ENCODE measurements at regions of chr4 and their contacts with region 1.

Region 1: DNA sequence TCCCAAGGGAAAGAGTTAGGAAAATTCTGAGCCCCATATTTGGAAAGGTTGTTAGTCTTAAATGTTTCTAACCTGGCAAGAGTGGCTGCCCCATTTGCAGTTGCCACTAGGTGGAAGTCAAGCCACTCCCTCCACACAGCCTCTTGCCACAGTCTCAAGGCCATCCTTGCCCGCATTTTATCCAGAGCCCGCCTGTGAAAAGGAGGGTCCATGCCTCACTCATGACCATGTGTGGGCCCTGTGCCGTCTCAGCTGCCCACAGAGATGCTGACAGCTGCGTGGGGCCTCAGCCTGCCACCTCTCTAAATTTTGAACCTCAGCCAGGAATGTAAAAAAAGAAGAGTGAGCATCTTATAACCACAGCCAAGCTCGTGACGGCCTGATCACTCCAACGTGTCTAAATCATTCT is 201.5 kb upstream of the FAM241A start:
- DNase-seq: peak; percentile 31 to 56
- H3K4me3 ChIP-seq: no peak overlapping the region
- H3K27ac ChIP-seq: no peak overlapping the region
- H3K4me1 ChIP-seq: no peaks in the 10 kb centered on the region
- H3K27me3 ChIP-seq: no peaks in the 10 kb centered on the region
- CTCF ChIP-seq: peak; percentile 68 to 80 (median 78)
- EP300 ChIP-seq: no peak
- POLR2A ChIP-seq: no peak
- RAD21 ChIP-seq: peak; percentile 84 to 89

Region 2: DNA sequence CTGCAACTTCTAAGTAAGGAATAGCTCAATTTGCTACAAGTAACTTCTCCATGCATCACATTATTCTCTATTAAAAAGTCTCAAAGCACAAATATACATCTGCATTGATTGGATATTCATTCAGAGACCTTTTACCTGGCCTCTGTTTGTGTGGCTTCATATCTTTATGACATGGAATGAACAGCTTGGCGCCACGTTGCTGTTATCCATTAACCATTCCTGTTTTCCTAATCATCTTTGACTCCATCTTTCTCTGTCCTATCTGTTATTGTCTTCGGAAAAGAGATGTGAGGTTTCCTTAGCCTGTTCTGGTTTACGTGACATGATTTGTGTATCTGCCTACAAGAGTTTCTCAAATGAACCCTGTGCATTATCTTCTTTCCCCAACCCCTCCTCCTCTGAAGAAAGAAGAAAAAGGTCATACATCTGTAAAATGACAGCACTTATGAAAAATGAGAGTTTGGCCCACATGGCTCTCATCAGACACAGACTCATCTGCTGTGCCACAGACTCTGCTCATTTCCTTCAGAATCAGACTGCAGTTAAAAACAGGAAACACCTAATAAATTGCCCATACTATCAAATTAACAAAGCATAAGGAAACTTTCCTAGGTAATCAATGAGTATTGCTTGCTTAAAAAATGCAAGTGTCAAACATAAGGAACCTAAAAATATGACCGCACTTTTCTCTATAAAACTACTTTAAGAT is 146.2 kb before region 1 on chr4:
- CTCF ChIA-PET with region 1: no interaction called
- POLR2A ChIA-PET with region 1: no interaction called
- DNase-seq: no peak
- H3K4me3 ChIP-seq: no peak overlapping the region
- H3K27ac ChIP-seq: no peak overlapping the region
- H3K4me1 ChIP-seq: no peaks in the 10 kb centered on the region
- H3K27me3 ChIP-seq: no peaks in the 10 kb centered on the region
- CTCF ChIP-seq: no peak
- EP300 ChIP-seq: no peak
- POLR2A ChIP-seq: no peak
- RAD21 ChIP-seq: no peak

Region 3: DNA sequence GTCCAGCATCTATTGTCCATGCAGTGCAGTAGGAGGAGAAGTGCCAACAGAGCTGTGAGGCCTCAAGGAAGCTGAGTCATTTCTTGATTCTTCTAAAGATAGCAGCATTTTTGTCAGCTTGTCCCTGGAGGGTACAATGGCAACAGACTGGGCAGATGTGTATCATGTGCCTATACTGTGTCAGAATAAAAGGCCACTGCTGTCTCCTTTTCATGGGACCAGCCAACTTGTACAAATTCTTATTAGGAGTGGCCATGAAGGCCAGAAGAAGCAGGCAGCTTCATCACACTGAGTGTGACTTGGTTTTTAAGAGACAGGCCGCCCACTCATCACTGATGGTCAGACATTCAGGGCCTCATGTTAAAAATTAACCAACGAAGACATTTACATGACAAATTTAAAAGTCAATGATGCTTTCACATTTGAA is 16.5 kb after region 1 on chr4:
- CTCF ChIA-PET with region 1: interaction called, 36 read pairs
- POLR2A ChIA-PET with region 1: no interaction called
- DNase-seq: no peak
- H3K4me3 ChIP-seq: no peak overlapping the region
- H3K27ac ChIP-seq: no peak overlapping the region
- H3K4me1 ChIP-seq: no peaks in the 10 kb centered on the region
- H3K27me3 ChIP-seq: no peaks in the 10 kb centered on the region
- CTCF ChIP-seq: no peak
- EP300 ChIP-seq: no peak
- POLR2A ChIP-seq: no peak
- RAD21 ChIP-seq: no peak

Region 4: DNA sequence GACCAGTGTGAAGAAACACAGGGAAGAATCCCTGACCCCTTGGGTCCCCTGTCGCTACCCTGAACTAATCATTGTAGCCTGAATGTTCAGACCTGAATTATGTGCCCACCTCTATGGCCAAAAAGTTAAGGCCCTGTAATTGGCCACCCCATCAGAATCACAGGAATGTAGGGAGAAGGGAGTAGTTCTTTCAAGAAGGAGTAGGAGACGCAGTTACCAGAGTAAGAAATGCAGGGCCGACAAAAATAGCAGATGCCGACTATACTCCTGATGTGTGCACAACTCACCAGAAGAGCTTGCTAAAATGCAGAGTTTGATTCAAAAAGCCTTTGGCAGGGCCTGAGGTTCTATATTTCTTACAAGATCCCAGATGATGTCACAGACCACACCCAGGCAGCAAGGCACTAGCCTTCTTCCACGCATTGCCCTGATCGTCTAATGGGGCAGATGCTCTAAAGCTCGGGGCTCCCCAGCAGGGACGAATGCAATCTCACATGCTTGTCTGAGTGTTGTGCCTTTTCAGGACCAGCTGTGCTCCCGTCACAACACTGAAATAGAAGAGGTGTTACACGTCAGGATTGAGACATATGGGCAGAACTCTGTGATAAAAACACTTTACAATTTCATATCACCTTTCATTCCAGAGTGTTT is 40.5 kb after region 1 on chr4:
- CTCF ChIA-PET with region 1: interaction called, 15 read pairs
- POLR2A ChIA-PET with region 1: no interaction called
- DNase-seq: peak in 1 of 2 experiments; percentile 48
- H3K4me3 ChIP-seq: no peak overlapping the region
- H3K27ac ChIP-seq: no peak overlapping the region
- H3K4me1 ChIP-seq: peaks cover 0 to 7% (median 4%) of the 10 kb centered on the region in 4 experiments; a peak in 4 of 7 replicates
- H3K27me3 ChIP-seq: no peaks in the 10 kb centered on the region
- CTCF ChIP-seq: peak in 2 of 3 experiments; percentile 26 to 55; a peak in 3 of 4 replicates
- EP300 ChIP-seq: no peak
- POLR2A ChIP-seq: no peak
- RAD21 ChIP-seq: 0 out of 4 replicates have a peak, but pooled peaks of 1 of the 2 experiments have one; percentile 16

Region 5: DNA sequence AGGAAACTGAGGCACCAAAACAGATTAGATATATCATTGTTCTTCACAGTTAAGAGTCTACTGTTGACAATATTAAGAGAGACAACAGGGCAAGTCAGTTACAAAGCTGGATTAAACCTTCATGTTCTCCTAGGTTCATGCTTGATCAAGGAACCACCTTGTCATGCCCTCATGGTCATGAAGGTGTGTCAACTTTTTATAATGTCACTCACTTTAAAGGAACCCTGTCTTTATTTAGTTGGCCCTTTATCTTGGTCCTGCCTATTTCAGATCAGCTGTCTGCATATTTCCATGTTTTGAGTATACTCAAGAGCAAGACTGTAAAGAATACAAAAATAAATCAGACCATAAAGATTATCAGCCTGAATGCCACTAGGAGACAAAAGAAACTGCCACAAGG is 61.2 kb after region 1 on chr4:
- CTCF ChIA-PET with region 1: interaction called, 10 read pairs
- POLR2A ChIA-PET with region 1: no interaction called
- DNase-seq: no peak
- H3K4me3 ChIP-seq: no peak overlapping the region
- H3K27ac ChIP-seq: no peak overlapping the region
- H3K4me1 ChIP-seq: 0 out of 7 replicates have a peak, but pooled peaks cover 0 to 2% (median 0%) of the 10 kb centered on the region in 4 experiments
- H3K27me3 ChIP-seq: no peaks in the 10 kb centered on the region
- CTCF ChIP-seq: no peak
- EP300 ChIP-seq: no peak
- POLR2A ChIP-seq: no peak
- RAD21 ChIP-seq: no peak

Region 6: DNA sequence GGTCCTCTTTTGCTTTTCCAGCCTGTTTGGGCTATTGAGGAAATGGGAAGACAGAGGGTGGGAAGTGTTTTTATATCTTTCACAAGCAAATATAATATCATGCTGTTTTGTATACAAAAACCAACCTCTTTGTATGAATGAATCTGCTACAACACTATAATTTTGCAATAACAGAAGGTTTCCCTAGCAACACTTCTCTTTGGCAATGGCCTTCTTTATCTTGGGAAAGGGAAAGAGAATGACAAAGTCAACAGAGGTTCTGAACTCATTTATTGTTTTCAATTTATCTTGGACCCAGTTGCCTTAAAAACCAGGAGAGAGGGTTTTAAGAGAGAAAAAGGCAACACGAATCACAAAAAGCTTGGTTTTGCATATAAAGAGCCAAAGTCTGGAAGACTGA is 79.6 kb after region 1 on chr4:
- CTCF ChIA-PET with region 1: interaction called, 11 read pairs
- POLR2A ChIA-PET with region 1: no interaction called
- DNase-seq: no peak
- H3K4me3 ChIP-seq: no peak overlapping the region
- H3K27ac ChIP-seq: no peak overlapping the region
- H3K4me1 ChIP-seq: no peaks in the 10 kb centered on the region
- H3K27me3 ChIP-seq: no peaks in the 10 kb centered on the region
- CTCF ChIP-seq: no peak
- EP300 ChIP-seq: no peak
- POLR2A ChIP-seq: no peak
- RAD21 ChIP-seq: no peak

Region 7: GRCh38 chr4:112031712-112032328 is 88.0 kb after region 1 on chr4:
- CTCF ChIA-PET with region 1: interaction called, 94 read pairs
- POLR2A ChIA-PET with region 1: no interaction called
- DNase-seq: no peak
- H3K4me3 ChIP-seq: no peak overlapping the region
- H3K27ac ChIP-seq: no peak overlapping the region
- H3K4me1 ChIP-seq: no peaks in the 10 kb centered on the region
- H3K27me3 ChIP-seq: no peaks in the 10 kb centered on the region
- CTCF ChIP-seq: peak in 2 of 3 experiments; percentile 67 to 70; a peak in 3 of 4 replicates
- EP300 ChIP-seq: no peak
- POLR2A ChIP-seq: no peak
- RAD21 ChIP-seq: peak; percentile 92 to 93

Region 8: GRCh38 chr4:112060212-112060611 is 116.4 kb after region 1 on chr4:
- CTCF ChIA-PET with region 1: interaction called, 30 read pairs
- POLR2A ChIA-PET with region 1: no interaction called
- DNase-seq: no peak
- H3K4me3 ChIP-seq: no peak overlapping the region
- H3K27ac ChIP-seq: no peak overlapping the region
- H3K4me1 ChIP-seq: peaks cover 0 to 6% (median 4%) of the 10 kb centered on the region in 4 experiments; a peak in 4 of 7 replicates
- H3K27me3 ChIP-seq: no peaks in the 10 kb centered on the region
- CTCF ChIP-seq: peak in 2 of 3 experiments; percentile 56 to 64; a peak in 2 of 4 replicates
- EP300 ChIP-seq: no peak
- POLR2A ChIP-seq: no peak
- RAD21 ChIP-seq: peak; percentile 77 to 84

Region 9: DNA sequence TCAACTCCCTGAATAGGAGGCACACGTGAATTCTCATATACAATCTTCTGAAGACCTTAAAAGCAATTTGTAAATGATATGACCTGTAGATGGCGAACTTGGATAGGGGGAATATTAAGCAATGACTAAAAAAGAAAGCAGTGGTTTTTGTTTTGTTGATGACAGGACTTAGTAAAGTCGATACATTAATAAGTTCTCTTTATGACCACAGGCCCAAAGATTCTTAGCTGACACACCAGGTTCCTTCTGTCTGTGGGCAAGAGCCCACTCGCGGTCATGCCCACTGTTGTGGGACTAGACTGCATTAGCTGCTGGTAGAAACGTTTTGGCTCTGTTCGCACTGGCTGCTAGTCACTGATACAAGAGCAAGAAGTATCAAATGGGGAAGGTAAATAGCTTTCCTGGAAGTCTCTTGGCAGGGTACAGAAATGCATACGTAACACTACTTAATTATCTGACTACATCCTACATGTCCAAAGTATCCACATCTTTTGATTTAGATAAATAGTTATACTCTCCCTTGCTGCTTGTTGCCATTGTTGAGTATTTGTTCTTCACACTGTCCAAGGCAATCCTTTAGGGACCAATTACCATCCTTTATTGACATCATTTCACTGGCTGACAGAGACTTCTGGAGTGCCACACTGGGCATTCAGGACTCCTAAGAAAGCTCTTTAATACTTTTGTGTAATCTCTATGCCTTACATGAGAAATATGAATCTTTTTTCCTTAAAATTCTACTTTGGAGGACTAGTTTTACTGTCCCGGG is 384.4 kb after region 1 on chr4:
- CTCF ChIA-PET with region 1: no interaction called
- POLR2A ChIA-PET with region 1: no interaction called
- DNase-seq: no peak
- H3K4me3 ChIP-seq: no peak overlapping the region
- H3K27ac ChIP-seq: no peak overlapping the region
- H3K4me1 ChIP-seq: peaks cover 0 to 2% (median 0%) of the 10 kb centered on the region in 4 experiments; a peak in 1 of 7 replicates
- H3K27me3 ChIP-seq: no peaks in the 10 kb centered on the region; a peak in 2 of 7 replicates
- CTCF ChIP-seq: peak in 2 of 3 experiments; percentile 38 to 49; a peak in 2 of 4 replicates
- EP300 ChIP-seq: no peak
- POLR2A ChIP-seq: no peak
- RAD21 ChIP-seq: peak; percentile 80 to 84

Measured in H1 (cell line).